Endothelial cell of umbilical vein (primary cell): ENCODE measurements at regions of chr16 and their contacts with region 1.

Region 1: GRCh38 chr16:72467157-72467759 is 295.3 kb upstream of the PMFBP1 start:
- DNase-seq: peak; percentile 72
- H3K4me3 ChIP-seq: no peak overlapping the region
- H3K27ac ChIP-seq: no peak overlapping the region
- H3K4me1 ChIP-seq: peaks cover 7% of the 10 kb centered on the region
- H3K27me3 ChIP-seq: no peaks in the 10 kb centered on the region
- CTCF ChIP-seq: peak; percentile 42 to 53
- POLR2A ChIP-seq: no peak

Region 2: DNA sequence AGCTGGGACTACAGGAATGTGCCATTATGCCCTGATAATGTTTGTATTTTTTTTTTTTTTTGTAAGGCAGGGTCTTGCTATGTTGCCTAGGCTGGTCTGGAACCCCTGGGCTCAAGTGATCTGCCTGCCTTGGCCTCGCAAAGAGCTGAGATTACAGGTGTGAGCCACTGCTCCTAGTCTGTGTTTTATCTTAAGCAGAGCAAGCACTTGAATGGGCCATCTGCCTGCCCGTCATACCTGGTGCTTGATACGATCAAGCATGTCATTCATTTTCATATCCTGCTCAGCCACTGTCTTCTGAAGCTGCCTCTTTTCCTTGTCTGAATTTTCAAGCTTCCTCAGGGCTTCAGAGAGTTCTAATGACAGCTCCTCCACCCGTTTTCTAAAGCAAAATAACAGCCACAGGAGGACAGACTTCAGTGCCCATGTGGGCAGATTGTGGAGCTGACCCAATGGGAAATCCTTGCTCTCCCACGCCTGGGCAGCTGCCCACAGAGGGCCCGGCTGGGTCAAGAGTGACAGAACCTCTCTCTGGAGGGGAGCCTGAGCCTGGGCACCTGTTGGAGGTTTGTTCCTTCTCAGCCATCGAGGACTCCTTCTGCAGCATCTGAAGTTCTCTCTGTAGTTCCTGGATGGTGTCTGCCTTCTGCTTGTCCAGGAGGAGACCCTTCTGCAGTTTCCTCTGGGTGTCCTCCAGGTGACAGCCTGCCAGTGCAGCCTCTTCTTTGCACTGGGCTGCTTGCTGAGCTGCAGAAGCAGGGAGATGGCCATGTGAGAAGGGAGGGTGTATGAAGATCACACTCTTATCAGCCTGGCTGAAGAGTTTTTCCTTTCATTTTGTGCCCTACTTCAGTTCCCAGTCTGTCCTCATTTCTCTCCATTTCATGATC is 337.0 kb before region 1 on chr16:
- CTCF ChIA-PET with region 1: interaction called, 49 read pairs
- POLR2A ChIA-PET with region 1: no interaction called
- dilution Hi-C with region 1: loop called (anchors 25 kb)
- intact Hi-C with region 1: loop called (anchors 1 kb)
- DNase-seq: no peak
- H3K4me3 ChIP-seq: no peak overlapping the region
- H3K27ac ChIP-seq: no peak overlapping the region
- H3K4me1 ChIP-seq: peaks cover under 1% of the 10 kb centered on the region
- H3K27me3 ChIP-seq: peaks cover 0 to 3% of the 10 kb centered on the region in 2 experiments
- CTCF ChIP-seq: no peak
- POLR2A ChIP-seq: no peak

Region 3: GRCh38 chr16:72195609-72196008 is 271.6 kb before region 1 on chr16:
- CTCF ChIA-PET with region 1: interaction called, 11 read pairs
- POLR2A ChIA-PET with region 1: no interaction called
- dilution Hi-C with region 1: no loop called
- intact Hi-C with region 1: no loop called
- DNase-seq: no peak
- H3K4me3 ChIP-seq: no peak overlapping the region
- H3K27ac ChIP-seq: no peak overlapping the region
- H3K4me1 ChIP-seq: no peaks in the 10 kb centered on the region
- H3K27me3 ChIP-seq: no peaks in the 10 kb centered on the region
- CTCF ChIP-seq: peak in 1 of 2 donors; percentile 8
- POLR2A ChIP-seq: no peak

Region 4: GRCh38 chr16:73878611-73879010 is 1411.4 kb after region 1 on chr16:
- CTCF ChIA-PET with region 1: interaction called, 10 read pairs
- POLR2A ChIA-PET with region 1: no interaction called
- dilution Hi-C with region 1: no loop called
- intact Hi-C with region 1: no loop called
- DNase-seq: peak; percentile 65
- H3K4me3 ChIP-seq: no peak overlapping the region
- H3K27ac ChIP-seq: no peak overlapping the region
- H3K4me1 ChIP-seq: no peaks in the 10 kb centered on the region
- H3K27me3 ChIP-seq: no peaks in the 10 kb centered on the region
- CTCF ChIP-seq: peak in 1 of 2 donors; percentile 34
- POLR2A ChIP-seq: no peak